K562 (cell line): ENCODE measurements at regions of chr16 and their contacts with region 1.

Region 1: GRCh38 chr16:55760310-55761001 is 72.4 kb downstream of the CES1 start:
- DNase-seq: no peak
- ATAC-seq: peak; percentile 64; the same call in 2 of the 3 replicates
- H3K4me3 ChIP-seq: no peak overlapping the region
- H3K27ac ChIP-seq: no peak overlapping the region
- H3K4me1 ChIP-seq: peaks cover 0 to 6% of the 10 kb centered on the region in 2 experiments; a peak in 2 of 5 replicates
- H3K27me3 ChIP-seq: peaks cover 0 to 5% of the 10 kb centered on the region in 2 experiments; a peak in 1 of 5 replicates
- CTCF ChIP-seq: no peak
- EP300 ChIP-seq: no peak
- POLR2A ChIP-seq: no peak
- RAD21 ChIP-seq: no peak

Region 2: DNA sequence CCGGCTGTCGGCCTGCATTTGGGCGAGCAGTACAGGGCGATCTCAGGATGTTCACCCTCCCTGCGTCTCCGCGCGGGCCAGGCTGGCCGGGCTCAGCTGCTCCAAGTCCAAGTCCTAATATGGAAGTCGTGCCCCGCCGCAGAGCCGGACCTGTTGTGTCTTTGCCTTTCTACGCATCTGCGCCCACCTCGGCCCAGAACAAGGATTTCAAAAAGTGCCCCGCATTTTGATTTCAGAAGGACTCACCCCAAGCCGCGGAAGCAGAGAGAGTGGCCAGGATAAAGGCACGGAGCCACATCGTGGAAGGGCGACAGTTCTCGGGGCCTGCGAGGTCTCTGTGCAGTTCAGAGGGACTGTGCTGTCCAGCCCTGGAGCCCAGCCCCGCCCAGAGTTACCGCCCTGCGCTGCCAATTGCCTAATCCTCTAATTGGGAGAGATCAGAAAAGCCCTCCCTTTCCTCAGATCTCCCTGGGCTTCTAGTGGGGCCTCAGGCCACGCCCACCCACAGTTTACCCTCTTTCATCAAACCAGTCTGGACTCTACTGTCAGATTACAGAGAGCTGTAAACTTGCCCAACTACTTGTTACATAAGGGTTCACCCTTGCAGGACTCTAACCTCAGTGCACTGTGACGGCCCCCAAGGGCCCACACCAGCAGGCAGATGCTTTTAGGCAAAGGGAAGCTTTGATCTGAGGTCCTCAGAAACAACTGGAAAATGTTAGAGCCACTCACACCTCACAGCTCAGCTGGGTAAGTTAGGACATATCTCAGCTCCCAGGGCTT is 72.5 kb after region 1 on chr16 and contains the start of gene CES1:
- CTCF ChIA-PET with region 1: no interaction called
- POLR2A ChIA-PET with region 1: interaction called, 4 read pairs
- in situ Hi-C with region 1: loop called (anchors 5 kb)
- intact Hi-C with region 1: loop called (anchors 2 kb)
- DNase-seq: no peak
- ATAC-seq: peak; percentile 67
- H3K4me3 ChIP-seq: no peak within 1 kb of the TSS
- H3K27ac ChIP-seq: no peak within 1 kb of the TSS
- H3K4me1 ChIP-seq: peaks cover 0 to 6% of the 10 kb centered on the region in 2 experiments; a peak in 1 of 5 replicates
- H3K27me3 ChIP-seq: peaks cover 5 to 21% of the 10 kb centered on the region in 2 experiments; a peak in 4 of 5 replicates
- CTCF ChIP-seq: no peak
- EP300 ChIP-seq: no peak
- POLR2A ChIP-seq: no peak
- RAD21 ChIP-seq: no peak
- polyA plus RNA-seq, gene CES1: 0.10 to 0.13 TPM